ENCODE measurements at regions of chr21 and their contacts with region 1.

Region 1: DNA sequence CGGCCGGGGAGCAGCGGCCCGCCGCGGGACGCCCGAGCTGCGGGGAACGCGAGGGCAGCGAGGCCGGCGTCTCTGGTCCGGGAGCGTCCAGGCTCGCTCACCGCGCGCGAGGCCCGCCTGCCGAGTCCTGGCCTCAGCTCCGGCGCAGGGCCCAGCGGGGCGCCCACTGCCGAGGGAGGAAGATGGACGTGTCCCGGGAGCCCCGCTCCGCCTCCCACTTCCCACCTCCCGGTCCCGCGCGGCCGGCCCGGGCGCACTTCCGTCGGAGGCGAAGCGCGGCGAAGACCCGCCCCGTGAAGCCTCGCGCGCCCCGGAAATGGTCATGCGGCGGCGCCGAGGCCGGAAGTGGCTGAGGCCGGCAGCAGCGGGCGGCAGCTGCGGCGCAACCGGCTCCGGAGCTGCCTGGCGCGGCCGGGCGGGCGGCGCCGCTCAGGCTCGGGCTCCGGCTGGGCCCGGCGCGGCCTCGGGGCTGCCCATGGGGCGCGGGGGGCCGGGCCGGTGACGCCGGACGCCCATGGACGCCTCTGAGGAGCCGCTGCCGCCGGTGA is at the start of gene TRAPPC10:
- DNase-seq: peak; percentile 25 to 91
- H3K4me3 ChIP-seq: peak within 1 kb of the TSS; percentile 88 to 92
- H3K27ac ChIP-seq: peak within 1 kb of the TSS; percentile 94 to 96
- H3K4me1 ChIP-seq: peaks cover 0 to 17% of the 10 kb centered on the region in 2 donors
- H3K27me3 ChIP-seq: no peaks in the 10 kb centered on the region
- CTCF ChIP-seq: no peak
- total RNA-seq, gene TRAPPC10: 7.9 TPM

Region 2: GRCh38 chr21:43789276-43790009 is 222.6 kb before region 1 on chr21 and contains the start of gene RRP1:
- intact Hi-C with region 1: loop called (anchors 10 kb)
- DNase-seq: peak; percentile 56 to 95
- H3K4me3 ChIP-seq: peak within 1 kb of the TSS; percentile 77 to 95
- H3K27ac ChIP-seq: peak within 1 kb of the TSS; percentile 78 to 84
- H3K4me1 ChIP-seq: peaks cover 6 to 14% of the 10 kb centered on the region in 2 donors
- H3K27me3 ChIP-seq: no peaks in the 10 kb centered on the region
- CTCF ChIP-seq: peak; percentile 81 to 100 (median 98)
- total RNA-seq, gene RRP1: 52.0 TPM

Region 3: DNA sequence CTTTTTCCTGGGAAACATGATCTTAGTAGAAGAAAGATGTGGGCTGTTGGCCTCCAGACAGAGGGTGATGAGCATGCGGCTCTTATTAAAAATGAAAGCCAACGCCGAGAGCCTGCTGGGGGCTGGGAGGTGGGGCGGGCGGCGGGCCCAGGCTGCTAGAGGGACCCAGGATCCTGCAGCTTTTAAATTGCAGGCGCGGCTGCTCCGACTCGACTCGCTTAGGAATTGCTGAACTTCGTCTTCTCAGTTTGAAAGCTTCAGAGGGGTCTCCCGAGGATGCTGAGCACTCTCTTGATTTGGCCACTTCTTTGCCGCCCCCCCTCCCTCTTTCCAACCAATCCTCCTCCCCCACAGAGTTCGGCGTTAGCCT is 145.8 kb before region 1 on chr21:
- intact Hi-C with region 1: loop called (anchors 5 kb)
- DNase-seq: no peak
- H3K4me3 ChIP-seq: peak overlapping the region; percentile 85 to 100
- H3K27ac ChIP-seq: peak overlapping the region; percentile 83 to 87
- H3K4me1 ChIP-seq: peaks cover 0 to 15% of the 10 kb centered on the region in 2 donors
- H3K27me3 ChIP-seq: no peaks in the 10 kb centered on the region
- CTCF ChIP-seq: no peak

Region 4: DNA sequence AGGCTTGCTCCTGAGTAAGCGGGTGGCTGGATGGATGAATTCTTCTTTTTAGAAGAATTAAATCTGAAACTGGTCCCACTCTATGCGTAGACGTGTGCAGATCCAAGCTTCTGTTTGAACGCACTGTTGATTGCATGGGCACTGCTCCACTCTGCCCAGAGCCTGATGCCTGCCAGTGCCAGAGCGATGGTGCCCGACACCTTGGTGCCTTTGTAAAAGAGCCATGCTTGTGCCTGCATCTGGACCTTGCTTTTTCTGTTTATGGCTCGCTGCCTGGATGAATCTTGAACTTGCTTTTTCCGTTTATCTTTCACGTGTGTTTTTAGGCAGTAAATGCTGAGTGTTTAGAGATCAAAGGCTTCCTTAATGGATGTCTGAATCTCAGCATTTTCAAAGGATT is 80.2 kb after region 1 on chr21:
- intact Hi-C with region 1: no loop called
- DNase-seq: peak in 1 of 2 donors; percentile 54
- H3K4me3 ChIP-seq: no peak overlapping the region
- H3K27ac ChIP-seq: no peak overlapping the region
- H3K4me1 ChIP-seq: no peaks in the 10 kb centered on the region
- H3K27me3 ChIP-seq: no peaks in the 10 kb centered on the region
- CTCF ChIP-seq: no peak